AG04450 (cell line): ENCODE measurements at regions of chr7 and their contacts with region 1.

Region 1: DNA sequence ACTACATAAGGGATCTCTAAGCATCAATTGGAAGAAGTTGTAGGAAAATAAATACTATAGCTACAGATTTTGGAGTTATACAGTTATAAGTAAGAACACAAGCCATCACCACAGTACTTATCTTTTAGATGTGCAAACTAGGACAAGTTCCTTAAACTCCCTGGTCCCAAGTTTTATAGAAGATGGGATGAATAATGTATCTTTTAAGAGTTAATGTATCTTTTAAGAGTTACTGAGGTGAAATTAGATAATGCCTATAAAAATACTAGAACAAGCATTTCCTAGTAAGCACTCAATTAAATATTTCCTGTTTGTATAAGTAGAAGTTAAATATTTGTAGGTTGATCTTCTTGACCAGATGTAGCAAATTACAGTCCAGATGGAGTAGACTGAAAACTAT is 56.8 kb downstream of the SEMA3A start:
- DNase-seq: no peak
- H3K4me3 ChIP-seq: no peak overlapping the region
- H3K27ac ChIP-seq: no peak overlapping the region
- H3K27me3 ChIP-seq: no peaks in the 10 kb centered on the region
- CTCF ChIP-seq: no peak

Region 2: DNA sequence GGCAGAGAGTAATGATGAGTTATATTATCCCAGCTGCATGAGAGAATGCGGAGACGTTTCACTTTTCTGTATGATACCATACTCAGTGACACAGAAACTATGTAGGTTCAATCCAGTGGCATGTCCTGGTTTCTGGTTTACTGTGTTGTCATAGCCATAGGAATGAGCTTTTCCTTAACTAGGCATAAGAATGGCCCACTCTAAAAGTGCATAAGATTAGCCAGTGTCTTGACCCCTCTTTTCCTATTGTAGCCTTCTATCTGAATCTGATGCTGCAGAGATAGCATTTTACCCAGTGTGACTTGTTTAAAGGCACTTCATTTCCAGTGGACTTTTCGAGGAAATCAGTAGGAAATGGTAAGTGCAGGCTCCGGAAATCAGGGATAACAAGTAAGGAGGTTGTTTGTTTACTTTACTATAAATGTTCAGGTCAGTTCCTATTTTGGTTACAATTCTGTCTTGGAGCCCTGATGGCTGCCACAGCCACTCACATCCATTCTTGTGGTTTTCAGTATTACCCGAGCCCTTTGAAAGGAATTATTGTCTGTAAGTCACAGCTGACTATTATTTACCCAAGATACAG is 13.8 kb before region 1 on chr7:
- CTCF ChIA-PET with region 1: no interaction called
- POLR2A ChIA-PET with region 1: interaction called, 10 read pairs
- DNase-seq: no peak
- H3K4me3 ChIP-seq: peak overlapping the region; percentile 10
- H3K27ac ChIP-seq: no peak overlapping the region
- H3K27me3 ChIP-seq: no peaks in the 10 kb centered on the region
- CTCF ChIP-seq: no peak

Region 3: GRCh38 chr7:84154991-84155781 is 17.4 kb after region 1 on chr7:
- CTCF ChIA-PET with region 1: no interaction called
- POLR2A ChIA-PET with region 1: no interaction called
- DNase-seq: no peak
- H3K4me3 ChIP-seq: no peak overlapping the region
- H3K27ac ChIP-seq: no peak overlapping the region
- H3K27me3 ChIP-seq: no peaks in the 10 kb centered on the region
- CTCF ChIP-seq: no peak

Region 4: GRCh38 chr7:84629216-84629615 is 491.4 kb after region 1 on chr7:
- CTCF ChIA-PET with region 1: no interaction called
- POLR2A ChIA-PET with region 1: no interaction called
- DNase-seq: no peak
- H3K4me3 ChIP-seq: no peak overlapping the region
- H3K27ac ChIP-seq: no peak overlapping the region
- H3K27me3 ChIP-seq: no peaks in the 10 kb centered on the region
- CTCF ChIP-seq: no peak